ENCODE measurements at regions of chr16 and their contacts with region 1.

Region 1: GRCh38 chr16:78705694-78706093 is 606.2 kb downstream of the WWOX start:
- DNase-seq: peak in 1 of 2 experiments; percentile 39
- H3K4me3 ChIP-seq: no peak overlapping the region
- H3K4me3 Mint-ChIP-seq: no peak overlapping the region
- H3K27ac Mint-ChIP-seq: no peak overlapping the region
- H3K4me1 ChIP-seq: no peaks in the 10 kb centered on the region
- H3K4me1 Mint-ChIP-seq: no peaks in the 10 kb centered on the region
- H3K27me3 ChIP-seq: no peaks in the 10 kb centered on the region
- H3K27me3 Mint-ChIP-seq: no peaks in the 10 kb centered on the region
- CTCF ChIP-seq: peak; percentile 32 to 65

Region 2: DNA sequence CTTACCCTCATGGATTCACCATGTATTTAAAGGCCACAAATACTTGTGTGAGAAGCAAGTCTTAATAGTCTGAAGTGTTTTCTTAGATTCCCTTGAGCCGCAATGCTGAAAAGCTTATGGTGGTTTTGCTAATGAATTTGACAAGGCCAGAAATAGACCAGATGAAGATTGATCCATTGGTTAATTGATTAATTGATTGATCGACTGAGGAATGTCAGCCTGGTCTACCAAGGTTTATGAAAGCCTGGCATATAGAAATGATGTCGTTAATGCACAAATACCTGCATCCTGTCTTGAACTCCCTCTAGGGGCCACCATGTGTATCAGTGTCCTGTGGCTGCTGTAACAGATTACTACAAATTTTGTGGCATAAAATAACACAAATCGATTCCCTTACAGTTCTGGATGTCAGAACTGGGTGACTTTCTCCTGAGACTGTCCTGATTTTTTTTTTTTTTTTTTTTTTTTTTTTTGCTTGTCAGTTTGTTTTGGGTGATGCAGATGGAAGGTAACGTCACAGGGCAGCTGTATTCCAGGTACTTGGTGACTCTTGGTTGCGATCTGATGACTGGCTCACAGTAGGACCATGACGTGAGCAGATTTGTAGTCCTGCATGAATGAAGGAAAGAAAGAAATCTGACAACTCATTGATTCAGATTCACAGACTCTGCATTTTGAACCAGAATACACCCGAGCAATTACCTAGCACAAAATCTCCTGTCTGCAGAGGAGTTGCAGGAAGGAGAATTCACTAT is 341.7 kb after region 1 on chr16:
- CTCF ChIA-PET with region 1: no interaction called
- POLR2A ChIA-PET with region 1: no interaction called
- intact Hi-C with region 1: loop called (anchors 5 kb)
- DNase-seq: peak in 1 of 2 experiments; percentile 27
- H3K4me3 ChIP-seq: no peak overlapping the region
- H3K4me3 Mint-ChIP-seq: no peak overlapping the region
- H3K27ac Mint-ChIP-seq: no peak overlapping the region
- H3K4me1 ChIP-seq: no peaks in the 10 kb centered on the region
- H3K4me1 Mint-ChIP-seq: peaks cover 6% of the 10 kb centered on the region
- H3K27me3 ChIP-seq: no peaks in the 10 kb centered on the region
- H3K27me3 Mint-ChIP-seq: no peaks in the 10 kb centered on the region
- CTCF ChIP-seq: peak; percentile 53 to 78

Measured in Caco-2 (cell line).